ENCODE measurements at regions of chr1 and their contacts with region 1.

Region 1: DNA sequence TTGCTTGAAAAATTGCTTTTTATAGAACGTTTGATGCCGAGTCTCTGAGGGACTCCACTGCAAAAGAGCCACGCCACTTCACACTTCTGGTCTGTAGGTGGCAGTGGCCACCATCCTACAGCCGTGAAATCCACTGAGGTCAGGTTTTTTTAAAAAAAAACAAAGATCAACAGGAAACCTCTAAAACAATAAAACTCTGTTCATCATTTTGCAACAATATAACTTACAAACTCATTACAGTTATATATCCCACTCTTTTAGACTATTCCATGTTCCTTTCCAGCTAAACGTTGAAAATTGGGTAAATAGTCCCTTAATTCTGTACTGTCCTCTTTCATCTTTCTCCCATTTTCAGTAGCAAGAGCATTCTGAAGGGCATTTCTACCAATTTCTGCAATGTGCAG is 64.6 kb upstream of the FMN2 start:
- DNase-seq: peak; percentile 25
- H3K4me3 ChIP-seq: no peak overlapping the region
- H3K27ac ChIP-seq: no peak overlapping the region
- H3K4me1 ChIP-seq: no peaks in the 10 kb centered on the region
- CTCF ChIP-seq: peak; percentile 88

Region 2: DNA sequence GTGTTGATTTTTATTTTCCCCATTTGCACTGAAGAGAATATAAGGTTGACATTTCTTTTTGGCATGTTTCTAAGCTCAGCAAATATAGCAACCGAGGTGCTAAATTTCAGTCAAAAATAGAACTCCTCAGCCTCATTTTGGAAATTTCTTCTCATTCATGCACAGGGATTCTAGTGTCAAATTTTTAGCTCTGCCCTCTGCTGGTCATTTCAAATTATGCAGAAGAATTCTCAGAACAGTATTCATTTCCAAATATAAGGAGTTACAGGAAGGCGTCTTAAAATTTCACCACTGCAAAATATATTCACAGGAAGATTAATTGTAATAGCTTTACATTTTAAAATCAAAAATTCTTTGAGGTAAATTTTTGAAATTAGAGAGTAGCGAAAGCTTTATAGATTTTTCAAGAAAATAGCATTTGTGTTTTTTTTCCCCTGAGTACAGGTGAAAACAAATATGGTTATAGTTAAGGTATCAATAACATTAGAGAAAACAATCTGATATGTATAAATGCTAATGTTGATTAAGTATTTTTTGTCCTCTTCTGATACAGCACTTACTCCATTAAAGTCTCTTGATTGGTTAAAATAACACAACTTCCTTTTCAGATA is 122.5 kb after region 1 on chr1:
- CTCF ChIA-PET with region 1: no interaction called
- POLR2A ChIA-PET with region 1: no interaction called
- intact Hi-C with region 1: loop called (anchors 2 kb)
- DNase-seq: peak; percentile 11
- H3K4me3 ChIP-seq: no peak overlapping the region
- H3K27ac ChIP-seq: no peak overlapping the region
- H3K4me1 ChIP-seq: no peaks in the 10 kb centered on the region
- CTCF ChIP-seq: peak; percentile 92

Region 3: GRCh38 chr1:240189386-240189989 is 162.4 kb after region 1 on chr1:
- CTCF ChIA-PET with region 1: no interaction called
- POLR2A ChIA-PET with region 1: no interaction called
- intact Hi-C with region 1: loop called (anchors 10 kb)
- DNase-seq: peak; percentile 46
- H3K4me3 ChIP-seq: no peak overlapping the region
- H3K27ac ChIP-seq: no peak overlapping the region
- H3K4me1 ChIP-seq: no peaks in the 10 kb centered on the region
- CTCF ChIP-seq: peak; percentile 91

Measured in OCI-LY7 (cell line).